Heart left ventricle (tissue), 16 donors: ENCODE measurements at regions of chr15 and their contacts with region 1.

Region 1: GRCh38 chr15:31215490-31216214 is 111.0 kb upstream of the KLF13 start:
- DNase-seq: peak; percentile 81 to 95 (median 88)
- ATAC-seq: peak; percentile 77 to 90 (median 87)
- H3K4me3 ChIP-seq: peak overlapping the region; percentile 44 to 75 (median 65)
- H3K27ac ChIP-seq: peak overlapping the region; percentile 91 to 98 (median 96)
- H3K4me1 ChIP-seq: peaks cover 0 to 67% (median 33%) of the 10 kb centered on the region in 12 donors
- H3K27me3 ChIP-seq: no peaks in the 10 kb centered on the region
- CTCF ChIP-seq: peak; percentile 72 to 98 (median 92)
- POLR2A ChIP-seq: peak in 1 of 2 donors; percentile 36

Region 2: DNA sequence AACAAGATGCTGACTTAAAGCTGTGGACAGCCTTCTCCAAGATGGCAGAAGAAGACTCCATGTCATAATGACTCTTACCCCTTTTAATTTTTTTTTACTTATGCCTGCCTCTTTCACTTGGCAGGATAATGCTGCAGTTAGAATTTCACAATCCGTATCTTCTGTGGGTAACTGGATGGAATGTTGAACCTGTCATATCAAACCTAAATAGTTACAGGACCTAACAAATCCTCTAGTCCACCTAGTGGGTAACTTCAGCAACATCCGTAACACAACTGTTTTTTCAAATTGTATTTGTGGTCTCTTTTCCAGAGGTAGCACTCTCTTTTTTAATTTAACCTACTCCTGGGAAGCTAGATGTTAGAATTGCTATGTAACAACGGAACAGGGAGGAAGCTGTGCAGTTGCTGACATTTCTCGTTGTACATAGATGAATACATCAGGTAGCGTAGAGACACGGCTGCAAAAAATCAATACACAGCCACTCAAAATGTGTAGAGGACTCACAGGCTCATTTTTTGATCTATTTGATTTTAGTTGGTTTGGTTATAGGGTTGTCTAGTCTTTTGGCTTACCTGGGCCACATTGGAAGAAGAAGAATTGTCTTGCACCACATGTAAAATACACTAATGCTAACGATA is 70.3 kb before region 1 on chr15:
- intact Hi-C with region 1: no loop called
- DNase-seq: no peak
- ATAC-seq: no peak
- H3K4me3 ChIP-seq: no peak overlapping the region
- H3K27ac ChIP-seq: no peak overlapping the region
- H3K4me1 ChIP-seq: no peaks in the 10 kb centered on the region
- H3K27me3 ChIP-seq: no peaks in the 10 kb centered on the region
- CTCF ChIP-seq: no peak
- POLR2A ChIP-seq: no peak

Region 3: DNA sequence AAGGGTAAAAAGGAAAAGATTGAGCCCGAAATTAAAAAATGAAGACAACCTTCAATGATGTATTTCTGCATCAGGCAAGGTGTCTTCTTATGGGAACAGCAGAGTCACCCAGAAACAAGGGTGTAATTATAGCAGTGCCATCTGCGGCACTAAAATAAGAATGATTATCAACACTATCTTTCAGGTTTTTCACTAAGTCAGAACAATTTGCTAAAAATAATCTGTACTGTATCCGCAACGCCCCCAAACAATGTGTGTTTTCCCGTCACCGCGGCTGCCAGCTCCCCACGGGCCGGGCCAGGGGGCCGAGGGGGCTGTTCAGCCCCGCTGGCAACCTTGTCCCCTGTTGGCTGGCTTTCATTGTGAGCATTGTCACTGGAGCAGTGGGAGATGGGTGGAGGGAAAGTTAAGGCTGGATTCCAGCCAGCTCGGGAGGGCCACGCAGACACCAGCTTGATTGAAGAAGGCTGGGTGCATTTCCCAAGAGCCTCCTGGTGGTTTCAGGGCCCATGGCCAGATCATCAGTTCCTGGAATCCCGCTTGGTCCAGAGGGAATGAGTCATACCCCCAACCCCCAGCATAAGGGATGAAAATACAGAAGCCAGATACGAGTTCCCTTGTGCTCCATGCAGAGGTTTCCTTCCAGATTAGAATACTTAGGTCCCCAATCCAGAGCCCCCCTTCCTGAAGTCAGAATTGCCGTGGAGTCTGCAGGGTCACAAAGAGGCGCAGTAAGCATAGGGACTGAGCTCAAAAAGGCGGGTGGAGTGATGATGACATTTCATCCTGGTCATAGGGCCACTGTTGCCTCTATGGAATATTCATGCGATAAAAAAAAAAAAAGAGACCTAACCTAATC is 20.8 kb after region 1 on chr15:
- intact Hi-C with region 1: loop called in 3 of 10 experiments (anchors 1 to 2 kb)
- DNase-seq: peak; percentile 82 to 89 (median 84)
- ATAC-seq: peak; percentile 83 to 96 (median 94)
- H3K4me3 ChIP-seq: peak overlapping the region in 8 of 12 donors; percentile 4 to 31 (median 23)
- H3K27ac ChIP-seq: peak overlapping the region; percentile 83 to 96 (median 90)
- H3K4me1 ChIP-seq: peaks cover 5 to 53% (median 30%) of the 10 kb centered on the region in 12 donors
- H3K27me3 ChIP-seq: no peaks in the 10 kb centered on the region
- CTCF ChIP-seq: peak in 3 of 12 donors; percentile 5 to 28 (median 12)
- POLR2A ChIP-seq: no peak

Region 4: DNA sequence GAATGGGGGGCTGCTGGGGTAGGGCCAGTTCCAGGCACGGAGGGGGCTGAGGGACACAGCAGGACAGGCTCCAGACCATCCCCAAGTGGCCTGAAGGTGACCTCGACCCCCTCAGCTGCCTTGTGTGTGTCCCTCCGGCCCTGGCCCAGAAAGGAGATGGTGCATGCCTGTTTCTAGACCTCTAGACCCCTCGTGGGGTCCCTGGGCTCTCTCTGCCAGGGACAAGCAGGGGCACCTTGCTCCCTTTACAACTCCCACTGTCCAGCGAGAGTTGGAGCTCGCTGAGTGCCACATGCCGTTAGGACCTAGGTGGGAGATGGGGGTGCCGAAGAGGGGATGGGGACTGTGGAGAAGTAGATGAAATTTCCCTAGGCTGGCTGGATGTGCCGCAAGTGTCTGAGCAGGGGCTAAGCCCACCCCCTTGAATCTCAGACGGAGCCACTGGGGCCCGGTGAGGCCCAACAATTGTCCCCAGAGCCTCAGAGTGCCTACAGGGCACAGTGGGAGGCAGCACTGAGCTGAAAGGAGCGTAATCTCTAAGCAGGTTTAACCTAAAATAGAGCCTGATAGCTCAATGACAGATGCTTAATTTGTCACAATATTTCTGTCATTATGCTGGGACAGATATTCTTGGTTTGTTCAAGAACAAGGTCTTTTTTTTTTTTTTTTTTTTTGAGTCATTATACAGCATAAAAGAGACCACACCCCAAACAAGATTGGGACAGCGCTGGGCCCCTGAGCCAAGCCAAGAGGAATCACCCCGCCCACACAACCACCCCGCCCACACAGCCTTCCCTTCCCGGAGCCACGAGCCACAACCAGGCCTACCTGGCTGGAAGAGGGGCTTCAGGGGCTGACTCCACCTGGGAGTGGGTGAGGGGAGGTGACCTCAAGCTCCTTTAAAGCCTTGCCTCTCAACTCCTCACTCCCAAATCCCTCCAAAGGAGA is 87.4 kb after region 1 on chr15:
- intact Hi-C with region 1: loop called in 4 of 10 experiments (anchors 5 kb)
- DNase-seq: peak in 3 of 5 donors; percentile 43 to 66 (median 52)
- ATAC-seq: peak; percentile 26 to 49 (median 46)
- H3K4me3 ChIP-seq: no peak overlapping the region
- H3K27ac ChIP-seq: peak overlapping the region in 2 of 12 donors; percentile 6 to 29
- H3K4me1 ChIP-seq: peaks cover 0 to 81% (median 60%) of the 10 kb centered on the region in 12 donors
- H3K27me3 ChIP-seq: peaks cover 0 to 8% (median 0%) of the 10 kb centered on the region in 9 donors
- CTCF ChIP-seq: peak in 4 of 12 donors; percentile 7 to 36 (median 30)
- POLR2A ChIP-seq: no peak

Region 5: GRCh38 chr15:31391687-31392671 is 176.3 kb after region 1 on chr15:
- intact Hi-C with region 1: loop called in 6 of 10 experiments (anchors 2 to 10 kb)
- DNase-seq: peak; percentile 81 to 93 (median 90)
- ATAC-seq: peak; percentile 48 to 85 (median 80)
- H3K4me3 ChIP-seq: peak overlapping the region; percentile 57 to 88 (median 75)
- H3K27ac ChIP-seq: peak overlapping the region; percentile 92 to 99 (median 96)
- H3K4me1 ChIP-seq: peaks cover 0 to 33% (median 20%) of the 10 kb centered on the region in 12 donors
- H3K27me3 ChIP-seq: no peaks in the 10 kb centered on the region
- CTCF ChIP-seq: peak in 2 of 12 donors; percentile 9 to 13
- POLR2A ChIP-seq: peak; percentile 32 to 91

Region 6: DNA sequence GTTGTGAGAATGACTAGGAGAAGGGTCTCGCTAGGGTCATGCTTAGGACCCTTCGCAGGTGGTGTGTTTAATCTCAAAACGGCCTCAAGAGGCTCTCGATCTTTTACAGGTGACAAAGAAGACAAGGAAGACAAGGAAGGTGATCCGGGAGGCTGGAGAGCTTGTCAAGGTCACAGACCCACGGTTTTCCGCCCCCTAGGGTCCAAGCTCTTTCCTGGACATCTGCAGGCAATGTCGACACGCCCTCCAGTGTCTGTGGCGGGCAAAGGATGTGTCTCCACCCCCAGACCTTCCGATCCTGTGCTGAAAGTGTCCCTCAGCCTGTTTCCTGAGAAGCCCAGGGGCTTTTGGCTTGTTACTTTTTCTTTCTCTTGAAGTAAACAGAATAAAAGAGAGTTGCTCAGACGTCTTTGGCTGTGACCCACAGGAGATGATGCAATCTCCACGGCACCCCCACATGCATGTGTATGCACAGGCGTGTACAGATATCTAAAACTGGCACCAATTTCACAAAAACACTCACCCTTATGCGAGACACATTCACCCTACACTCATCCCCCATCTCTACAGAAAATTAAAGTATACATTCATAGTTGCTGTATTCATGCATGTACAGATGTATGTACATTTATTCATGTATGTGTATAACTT is 219.7 kb after region 1 on chr15:
- intact Hi-C with region 1: loop called in 6 of 10 experiments (anchors 1 to 10 kb)
- DNase-seq: peak; percentile 78 to 90 (median 86)
- ATAC-seq: peak; percentile 82 to 92 (median 86)
- H3K4me3 ChIP-seq: peak overlapping the region in 9 of 12 donors; percentile 8 to 54 (median 30)
- H3K27ac ChIP-seq: peak overlapping the region; percentile 50 to 94 (median 68)
- H3K4me1 ChIP-seq: peaks cover 0 to 52% (median 21%) of the 10 kb centered on the region in 12 donors
- H3K27me3 ChIP-seq: no peaks in the 10 kb centered on the region
- CTCF ChIP-seq: peak; percentile 58 to 95 (median 80)
- POLR2A ChIP-seq: peak in 1 of 2 donors; percentile 10